Activated T-helper 2 cell treated with anti-CD3 and anti-CD28 coated beads, Interferon-gamma antibody, Interleukin-2, Interleukin-4, amounts not matched to agents 10 μg/mL and 5 μg/mL and 100 μg/mL, durations not matched to agents 14 hours and 24 hours and 36 hours (primary cell): ENCODE measurements at regions of chr5 and their contacts with region 1.

Region 1: DNA sequence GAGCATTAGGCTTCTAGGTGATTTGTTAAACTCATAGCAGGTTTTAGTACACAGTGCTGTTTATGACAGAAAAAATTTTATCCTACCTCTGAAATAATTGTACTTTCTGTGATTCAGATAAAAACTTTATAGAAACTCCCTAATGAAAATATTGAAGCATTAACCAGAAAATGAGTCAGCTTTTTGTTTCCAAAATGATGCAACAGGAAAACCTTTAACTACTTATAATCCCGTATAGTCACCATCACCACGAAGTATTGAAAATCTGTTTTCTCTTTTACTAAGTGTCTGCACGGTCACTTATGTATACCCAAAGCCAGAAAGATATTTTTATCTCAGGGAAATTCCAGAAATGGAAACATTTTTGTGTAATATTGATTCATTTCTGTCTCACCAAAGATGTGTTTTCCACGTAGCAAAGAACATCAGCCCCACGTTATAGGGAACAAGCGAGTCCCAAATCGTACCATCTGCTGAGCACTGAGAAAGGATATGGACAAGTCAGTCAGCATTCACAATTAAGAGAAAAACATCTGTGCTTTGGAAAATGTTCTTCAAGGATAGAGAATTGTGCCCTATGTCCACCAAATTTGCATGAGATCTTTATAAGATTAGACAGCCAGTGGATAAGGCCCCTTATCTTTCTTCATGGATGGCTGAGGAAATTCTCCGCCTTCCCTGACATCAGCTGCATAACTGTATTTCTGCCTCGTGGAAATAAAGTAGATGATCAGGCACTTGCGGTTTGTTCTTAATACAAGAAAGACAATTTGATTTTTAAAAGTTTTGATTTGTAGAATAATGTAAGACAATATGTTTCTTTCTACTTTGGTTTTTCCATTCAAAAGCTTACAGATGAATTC is 41.9 kb downstream of the TNFAIP8 start:
- DNase-seq: no peak
- H3K4me3 Mint-ChIP-seq: peak overlapping the region; percentile 17
- H3K27ac Mint-ChIP-seq: peak overlapping the region; percentile 87
- H3K4me1 Mint-ChIP-seq: peaks cover 59% of the 10 kb centered on the region
- H3K27me3 Mint-ChIP-seq: no peaks in the 10 kb centered on the region

Region 2: DNA sequence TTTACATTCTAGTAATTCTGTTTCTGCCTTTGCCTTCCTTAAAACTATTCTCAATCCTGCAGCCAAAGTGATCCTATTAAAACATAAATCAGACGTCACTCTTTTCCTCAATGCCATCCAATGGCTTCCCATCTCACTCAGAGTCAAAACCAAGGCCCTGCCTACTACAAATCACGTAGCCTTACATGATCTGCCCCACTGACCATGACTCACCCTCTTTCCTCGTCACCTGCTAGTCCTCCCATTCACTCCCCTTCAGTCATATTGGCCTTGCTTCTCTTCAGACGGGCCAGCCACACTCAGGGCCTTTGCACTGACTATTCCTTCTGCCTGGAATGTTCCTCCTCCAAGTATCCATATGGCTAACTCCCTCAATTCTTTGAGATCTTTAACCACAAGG is 365.8 kb before region 1 on chr5:
- intact Hi-C with region 1: loop called (anchors 5 kb)
- DNase-seq: no peak
- H3K4me3 Mint-ChIP-seq: peak overlapping the region; percentile 3
- H3K27ac Mint-ChIP-seq: peak overlapping the region; percentile 58
- H3K4me1 Mint-ChIP-seq: peaks cover 25% of the 10 kb centered on the region
- H3K27me3 Mint-ChIP-seq: no peaks in the 10 kb centered on the region

Region 3: GRCh38 chr5:119274767-119275130 is 123.0 kb before region 1 on chr5:
- intact Hi-C with region 1: loop called (anchors 2 kb)
- DNase-seq: no peak
- H3K4me3 Mint-ChIP-seq: peak overlapping the region; percentile 52
- H3K27ac Mint-ChIP-seq: peak overlapping the region; percentile 92
- H3K4me1 Mint-ChIP-seq: peaks cover 88% of the 10 kb centered on the region
- H3K27me3 Mint-ChIP-seq: no peaks in the 10 kb centered on the region

Region 4: GRCh38 chr5:119355685-119356611 is 41.8 kb before region 1 on chr5 and contains the start of gene TNFAIP8:
- intact Hi-C with region 1: loop called (anchors 1 kb)
- DNase-seq: peak; percentile 46
- H3K4me3 Mint-ChIP-seq: peak within 1 kb of the TSS; percentile 99
- H3K27ac Mint-ChIP-seq: peak within 1 kb of the TSS; percentile 93
- H3K4me1 Mint-ChIP-seq: peaks cover 76% of the 10 kb centered on the region
- H3K27me3 Mint-ChIP-seq: no peaks in the 10 kb centered on the region
- total RNA-seq, gene TNFAIP8: 112 and 117 TPM in 2 replicates

Region 5: GRCh38 chr5:119411935-119412602 is 14.3 kb after region 1 on chr5:
- intact Hi-C with region 1: loop called (anchors 1 kb)
- DNase-seq: peak; percentile 38
- H3K4me3 Mint-ChIP-seq: peak overlapping the region; percentile 83
- H3K27ac Mint-ChIP-seq: peak overlapping the region; percentile 42
- H3K4me1 Mint-ChIP-seq: peaks cover 36% of the 10 kb centered on the region
- H3K27me3 Mint-ChIP-seq: peaks cover 9% of the 10 kb centered on the region